Naive thymus-derived CD4-positive, alpha-beta T cell (primary cell): ENCODE measurements at regions of chr18 and their contacts with region 1.

Region 1: GRCh38 chr18:2223849-2224248 is 347.5 kb downstream of the METTL4 start:
- DNase-seq: no peak
- ATAC-seq: no peak
- H3K4me3 ChIP-seq: no peak overlapping the region
- H3K4me3 Mint-ChIP-seq: no peak overlapping the region
- H3K27ac ChIP-seq: no peak overlapping the region
- H3K27ac Mint-ChIP-seq: no peak overlapping the region
- H3K4me1 ChIP-seq: no peaks in the 10 kb centered on the region
- H3K4me1 Mint-ChIP-seq: no peaks in the 10 kb centered on the region
- H3K27me3 ChIP-seq: no peaks in the 10 kb centered on the region
- H3K27me3 Mint-ChIP-seq: peaks cover 6 to 34% (median 21%) of the 10 kb centered on the region in 5 donors

Region 2: GRCh38 chr18:1585879-1586488 is 637.9 kb before region 1 on chr18:
- CTCF ChIA-PET with region 1: no interaction called
- POLR2A ChIA-PET with region 1: no interaction called
- intact Hi-C with region 1: loop called in 1 of 2 experiments (anchors 2 kb)
- DNase-seq: peak in 1 of 9 donors; percentile 22
- ATAC-seq: peak; percentile 37
- H3K4me3 ChIP-seq: no peak overlapping the region
- H3K4me3 Mint-ChIP-seq: no peak overlapping the region
- H3K27ac ChIP-seq: no peak overlapping the region
- H3K27ac Mint-ChIP-seq: no peak overlapping the region
- H3K4me1 ChIP-seq: no peaks in the 10 kb centered on the region
- H3K4me1 Mint-ChIP-seq: no peaks in the 10 kb centered on the region
- H3K27me3 ChIP-seq: no peaks in the 10 kb centered on the region
- H3K27me3 Mint-ChIP-seq: peaks cover 2 to 31% (median 8%) of the 10 kb centered on the region in 5 donors

Region 3: GRCh38 chr18:2302614-2303516 is 79.0 kb after region 1 on chr18:
- CTCF ChIA-PET with region 1: no interaction called
- POLR2A ChIA-PET with region 1: no interaction called
- intact Hi-C with region 1: no loop called
- DNase-seq: no peak
- ATAC-seq: no peak
- H3K4me3 ChIP-seq: no peak overlapping the region
- H3K4me3 Mint-ChIP-seq: no peak overlapping the region
- H3K27ac ChIP-seq: no peak overlapping the region
- H3K27ac Mint-ChIP-seq: no peak overlapping the region
- H3K4me1 ChIP-seq: no peaks in the 10 kb centered on the region
- H3K4me1 Mint-ChIP-seq: no peaks in the 10 kb centered on the region
- H3K27me3 ChIP-seq: no peaks in the 10 kb centered on the region
- H3K27me3 Mint-ChIP-seq: peaks cover 22 to 45% (median 40%) of the 10 kb centered on the region in 5 donors